Mammary epithelial cell (primary cell): ENCODE measurements at regions of chr2 and their contacts with region 1.

Region 1: GRCh38 chr2:10487144-10488104 is 39.3 kb upstream of the ODC1 start:
- DNase-seq: no peak
- H3K4me3 ChIP-seq: no peak overlapping the region
- H3K27ac ChIP-seq: no peak overlapping the region
- H3K4me1 ChIP-seq: peaks cover under 1% of the 10 kb centered on the region
- H3K27me3 ChIP-seq: peaks cover 3% of the 10 kb centered on the region
- CTCF ChIP-seq: no peak

Region 2: DNA sequence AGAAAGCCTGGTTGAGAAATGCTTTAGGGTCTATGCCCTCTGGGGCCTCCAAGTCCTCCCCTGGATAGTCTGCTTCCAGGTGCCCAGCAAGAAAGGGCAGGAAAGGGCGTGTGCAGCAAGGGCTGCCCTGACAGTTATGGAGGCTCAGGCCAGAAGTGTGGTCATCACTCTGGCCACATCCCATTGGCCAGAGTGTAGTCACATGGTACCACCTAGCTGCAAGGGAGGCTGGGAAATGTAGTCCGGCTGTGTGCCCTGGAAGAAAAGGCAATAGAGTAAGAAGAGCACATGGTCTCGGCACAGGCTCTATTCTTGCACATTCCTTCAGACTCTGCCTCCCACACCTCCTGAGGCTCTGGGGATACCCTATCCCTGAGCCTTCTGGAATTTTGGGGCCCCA is 75.0 kb before region 1 on chr2:
- CTCF ChIA-PET with region 1: no interaction called
- dilution Hi-C with region 1: no loop called
- in situ Hi-C with region 1: no loop called
- intact Hi-C with region 1: no loop called
- DNase-seq: peak; percentile 60
- H3K4me3 ChIP-seq: no peak overlapping the region
- H3K27ac ChIP-seq: no peak overlapping the region
- H3K4me1 ChIP-seq: peaks cover 51% of the 10 kb centered on the region
- H3K27me3 ChIP-seq: no peaks in the 10 kb centered on the region
- CTCF ChIP-seq: no peak

Region 3: DNA sequence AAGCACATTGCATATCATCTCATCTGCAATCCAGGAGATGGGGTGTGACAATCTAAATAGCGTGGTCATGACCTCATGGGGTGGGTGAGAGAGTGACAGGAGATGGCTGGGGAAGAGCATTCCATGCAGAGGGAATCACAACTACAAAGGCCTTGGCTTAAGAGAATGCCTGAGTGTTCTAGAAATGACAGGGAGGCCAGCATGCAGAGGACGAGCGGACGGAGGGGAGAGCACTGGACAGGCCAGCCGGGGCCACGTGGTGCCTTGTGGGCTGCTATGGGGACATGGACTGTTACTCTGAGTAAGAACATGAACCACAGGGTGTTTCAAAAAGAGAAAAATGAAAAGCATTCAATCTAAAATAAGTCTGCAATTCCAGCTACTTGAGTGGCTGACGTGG is 78.6 kb after region 1 on chr2:
- CTCF ChIA-PET with region 1: no interaction called
- dilution Hi-C with region 1: loop called (anchors 5 kb)
- in situ Hi-C with region 1: no loop called
- intact Hi-C with region 1: no loop called
- DNase-seq: no peak
- H3K4me3 ChIP-seq: no peak overlapping the region
- H3K27ac ChIP-seq: no peak overlapping the region
- H3K4me1 ChIP-seq: peaks cover 2% of the 10 kb centered on the region
- H3K27me3 ChIP-seq: no peaks in the 10 kb centered on the region
- CTCF ChIP-seq: no peak